GM18951 (cell line): ENCODE measurements at regions of chr18 and their contacts with region 1.

Region 1: DNA sequence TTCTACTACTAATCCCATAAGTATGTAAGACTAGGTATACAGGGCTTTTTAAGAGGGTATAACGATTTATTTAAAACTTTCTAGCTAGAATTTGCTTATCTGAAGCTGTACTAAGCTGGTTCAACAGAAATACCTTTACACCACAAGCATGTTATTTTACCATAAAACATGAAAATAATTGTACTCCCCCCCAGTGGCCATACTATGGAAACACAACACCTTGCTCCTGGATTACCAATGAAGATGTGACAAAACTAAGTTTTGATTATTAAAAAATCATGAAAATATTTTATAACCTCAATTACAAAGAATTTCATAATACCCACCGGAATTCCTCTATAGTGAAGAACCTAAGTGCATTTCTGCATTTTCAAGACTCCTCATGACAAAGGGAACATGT is 27.3 kb downstream of the LPIN2 start:
- POLR2A ChIP-seq: no peak

Region 2: DNA sequence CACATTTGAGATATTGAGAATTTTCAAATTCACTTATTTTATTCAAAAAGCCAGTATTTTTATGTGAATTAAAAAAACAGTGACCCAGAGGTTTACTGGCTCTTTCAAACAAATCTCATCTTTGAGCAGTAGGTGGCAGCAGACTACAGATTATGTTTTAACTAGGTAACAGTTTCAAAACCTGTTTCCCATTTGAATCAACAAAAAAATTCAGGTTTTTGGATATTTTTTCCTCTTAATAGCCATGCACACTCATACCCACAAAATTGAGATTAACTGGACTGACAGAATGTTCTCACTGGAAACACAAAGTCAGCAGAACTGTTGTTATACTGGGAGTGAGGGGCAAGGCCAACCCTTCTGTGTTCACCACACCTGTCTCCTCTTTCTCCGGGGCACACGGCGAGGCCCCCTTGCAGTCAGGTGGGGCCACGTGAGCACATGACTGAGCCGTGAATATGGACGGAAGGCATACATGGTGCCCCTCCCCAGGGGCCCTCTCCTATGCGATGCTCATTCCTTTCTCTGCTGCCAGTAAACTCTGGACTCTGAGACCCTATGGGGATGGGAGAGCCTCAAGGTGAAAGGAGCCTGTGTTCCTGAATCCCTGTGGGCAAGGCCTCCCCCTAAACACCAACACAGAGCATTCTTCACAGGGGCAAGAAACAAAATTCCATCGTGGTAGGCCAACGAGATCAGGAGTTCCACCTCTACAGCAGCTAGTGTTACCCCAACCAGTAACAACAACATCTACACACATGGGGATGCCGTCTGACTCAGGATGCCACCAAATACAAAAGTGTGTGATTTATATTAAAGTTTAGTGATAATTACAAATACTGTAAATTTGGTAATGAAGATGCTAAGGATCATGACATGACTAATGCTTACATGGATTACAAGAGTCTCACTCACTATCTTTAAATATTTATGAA is 53.1 kb before region 1 on chr18:
- in situ Hi-C with region 1: loop called (anchors 10 kb)
- POLR2A ChIP-seq: no peak

Region 3: DNA sequence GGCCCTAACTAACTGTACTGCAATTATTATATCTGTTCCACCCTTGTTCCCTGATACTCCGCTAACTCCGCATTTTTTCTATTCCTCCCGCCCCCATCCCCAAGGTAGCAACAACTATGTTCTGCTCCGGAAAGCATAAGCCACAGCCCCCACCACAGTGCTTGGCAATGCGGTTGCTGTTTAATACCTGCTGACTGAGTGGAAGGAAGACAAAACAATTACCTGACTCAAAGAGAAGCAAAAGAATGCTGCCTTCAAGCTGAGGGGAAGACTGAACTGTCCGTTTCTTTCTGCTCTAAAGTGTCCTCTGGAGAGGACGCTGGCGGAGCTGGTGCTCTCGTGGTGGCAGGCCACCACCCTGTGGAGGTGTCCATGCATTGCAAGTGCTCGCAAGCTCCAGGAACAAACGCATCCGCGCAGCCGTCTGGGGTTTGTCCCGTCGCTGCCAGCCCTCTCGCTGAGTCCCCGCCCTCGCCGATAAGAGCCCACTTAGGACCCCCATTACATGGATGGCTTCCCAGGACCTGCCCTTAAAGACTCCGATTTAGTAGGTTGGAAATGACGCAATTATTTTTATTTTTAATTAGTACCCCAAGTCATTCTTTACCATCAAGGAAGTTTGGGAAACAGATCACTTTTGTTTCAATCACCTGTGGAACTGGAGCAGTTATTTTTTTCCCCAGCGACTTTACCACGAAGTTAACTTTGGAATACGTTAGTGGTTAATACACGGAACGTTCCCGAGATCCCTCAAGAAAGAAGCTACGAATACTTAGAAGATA is 260.4 kb after region 1 on chr18:
- in situ Hi-C with region 1: loop called (anchors 10 kb)
- POLR2A ChIP-seq: no peak